AG04449 (cell line): ENCODE measurements at regions of chr1 and their contacts with region 1.

Region 1: DNA sequence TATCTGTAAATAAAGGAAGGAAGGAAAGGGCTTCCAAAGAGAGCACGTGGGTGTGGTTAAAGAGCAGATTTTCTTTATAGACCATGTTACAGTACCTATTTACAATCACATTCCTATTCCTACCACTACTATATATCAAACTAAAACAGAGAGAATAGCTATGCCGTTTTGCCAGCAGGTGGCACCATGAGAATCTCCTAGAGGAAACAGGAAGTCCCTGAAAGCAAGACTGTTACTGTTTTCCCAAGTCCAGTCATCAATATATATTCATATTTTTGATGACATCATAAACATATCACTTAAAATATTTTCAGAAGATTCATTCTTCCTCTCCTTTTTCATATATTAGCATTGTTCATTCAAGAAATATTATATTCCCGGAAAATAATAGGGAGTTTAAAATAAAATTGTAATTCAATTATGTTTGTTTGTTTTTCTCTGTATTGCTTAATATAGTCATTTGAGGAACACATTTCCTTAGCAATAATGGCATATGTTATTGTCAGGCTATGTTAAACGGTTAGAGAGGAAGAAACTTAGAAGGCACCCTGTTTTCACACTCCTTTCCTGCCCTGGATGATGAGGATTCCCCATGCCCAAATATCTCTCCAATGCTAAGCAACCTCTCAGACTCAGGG is 6.6 kb downstream of the CCDC190 start:
- DNase-seq: no peak
- H3K4me3 ChIP-seq: no peak overlapping the region
- CTCF ChIP-seq: peak; percentile 63

Region 2: GRCh38 chr1:162621256-162621655 is 233.1 kb before region 1 on chr1:
- CTCF ChIA-PET with region 1: no interaction called
- POLR2A ChIA-PET with region 1: no interaction called
- DNase-seq: no peak
- H3K4me3 ChIP-seq: no peak overlapping the region
- CTCF ChIP-seq: no peak

Region 3: GRCh38 chr1:162868972-162869371 is 14.6 kb after region 1 on chr1:
- CTCF ChIA-PET with region 1: interaction called, 47 read pairs
- POLR2A ChIA-PET with region 1: interaction called, 6 read pairs
- DNase-seq: no peak
- H3K4me3 ChIP-seq: no peak overlapping the region
- CTCF ChIP-seq: no peak

Region 4: GRCh38 chr1:163060343-163061007 is 206.1 kb after region 1 on chr1:
- CTCF ChIA-PET with region 1: interaction called, 11 read pairs
- POLR2A ChIA-PET with region 1: no interaction called
- DNase-seq: no peak
- H3K4me3 ChIP-seq: no peak overlapping the region
- CTCF ChIP-seq: no peak

Region 5: GRCh38 chr1:163168053-163168452 is 313.7 kb after region 1 on chr1:
- CTCF ChIA-PET with region 1: interaction called, 11 read pairs
- POLR2A ChIA-PET with region 1: no interaction called
- DNase-seq: peak; percentile 96
- H3K4me3 ChIP-seq: no peak overlapping the region
- CTCF ChIP-seq: no peak

Region 6: GRCh38 chr1:163231385-163231784 is 377.0 kb after region 1 on chr1:
- CTCF ChIA-PET with region 1: no interaction called
- POLR2A ChIA-PET with region 1: no interaction called
- DNase-seq: peak; percentile 14
- H3K4me3 ChIP-seq: no peak overlapping the region
- CTCF ChIP-seq: no peak

Region 7: GRCh38 chr1:163315773-163316374 is 461.5 kb after region 1 on chr1:
- CTCF ChIA-PET with region 1: interaction called, 142 read pairs
- POLR2A ChIA-PET with region 1: no interaction called
- DNase-seq: no peak
- H3K4me3 ChIP-seq: no peak overlapping the region
- CTCF ChIP-seq: peak; percentile 39

Region 8: GRCh38 chr1:163321311-163322305 is 467.2 kb after region 1 on chr1 and contains the start of gene NUF2:
- CTCF ChIA-PET with region 1: interaction called, 142 read pairs
- POLR2A ChIA-PET with region 1: no interaction called
- DNase-seq: peak; percentile 96
- H3K4me3 ChIP-seq: peak within 1 kb of the TSS; percentile 87
- CTCF ChIP-seq: no peak